Adrenal gland (tissue), 19 donors: ENCODE measurements at regions of chr17 and their contacts with region 1.

Region 1: DNA sequence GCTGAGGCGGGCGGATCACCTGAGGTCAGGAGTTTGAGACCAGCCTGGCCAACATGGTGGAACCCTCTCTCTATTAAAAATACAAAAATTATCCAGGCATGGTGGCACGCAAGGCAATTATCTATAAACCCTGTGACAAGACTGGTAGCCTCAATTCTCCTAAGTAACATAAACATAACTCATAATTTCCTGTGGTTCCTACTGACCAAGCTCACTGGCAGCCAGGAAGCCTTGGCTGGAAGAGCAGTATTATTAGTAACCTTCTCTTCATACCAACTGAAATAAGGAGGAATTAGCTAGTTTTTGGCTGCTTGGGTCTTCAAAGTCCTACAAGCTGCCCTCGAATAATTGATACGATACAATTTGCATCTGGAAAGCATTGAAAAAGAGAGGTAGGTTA is 31.6 kb upstream of the LRRC37A3 start:
- DNase-seq: no peak
- H3K4me3 ChIP-seq: no peak overlapping the region
- H3K27ac ChIP-seq: no peak overlapping the region
- H3K4me1 ChIP-seq: no peaks in the 10 kb centered on the region
- H3K27me3 ChIP-seq: no peaks in the 10 kb centered on the region
- CTCF ChIP-seq: no peak
- POLR2A ChIP-seq: no peak

Region 2: DNA sequence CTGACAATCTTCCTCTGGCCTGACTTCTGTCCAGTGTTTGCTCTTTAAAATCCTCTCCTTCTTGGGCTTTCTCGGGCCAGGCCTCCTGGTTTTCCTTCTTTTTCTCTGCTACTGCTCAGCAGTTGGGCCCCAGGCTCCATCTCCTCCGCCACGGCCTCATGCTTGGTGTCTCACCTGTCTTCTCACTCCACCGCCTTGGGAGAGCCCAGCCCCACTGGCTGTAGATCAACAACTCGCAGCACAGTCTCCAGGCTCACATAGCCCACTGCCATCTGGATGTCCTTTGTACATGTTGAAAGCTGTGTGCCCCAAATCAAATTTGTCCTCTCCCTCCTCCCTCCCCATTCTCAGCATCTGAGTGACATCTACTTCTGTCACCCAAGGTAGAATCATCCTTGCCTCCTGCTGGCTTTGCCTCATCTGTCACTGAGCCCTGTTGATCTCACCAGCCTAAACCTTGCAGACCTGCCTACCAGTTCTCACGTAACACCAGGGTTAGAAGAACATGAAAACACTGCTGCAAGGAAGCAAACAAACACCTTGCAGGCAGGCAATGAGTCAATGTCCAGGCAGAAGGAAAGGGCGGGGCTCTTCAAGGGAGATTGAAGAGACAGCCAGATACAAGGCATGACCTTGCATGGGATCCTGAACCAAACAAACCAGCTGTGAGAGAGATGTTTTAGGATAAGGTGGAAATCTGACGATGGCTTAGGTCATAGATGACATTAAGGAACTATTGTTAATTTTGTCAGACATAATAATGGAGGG is 185.5 kb before region 1 on chr17:
- intact Hi-C with region 1: loop called (anchors 10 kb)
- DNase-seq: no peak
- H3K4me3 ChIP-seq: no peak overlapping the region
- H3K27ac ChIP-seq: no peak overlapping the region
- H3K4me1 ChIP-seq: no peaks in the 10 kb centered on the region
- H3K27me3 ChIP-seq: no peaks in the 10 kb centered on the region
- CTCF ChIP-seq: no peak
- POLR2A ChIP-seq: no peak

Region 3: GRCh38 chr17:64773836-64774761 is 176.8 kb before region 1 on chr17:
- intact Hi-C with region 1: loop called (anchors 10 kb)
- DNase-seq: peak in 1 of 7 donors; percentile 38
- H3K4me3 ChIP-seq: no peak overlapping the region
- H3K27ac ChIP-seq: no peak overlapping the region
- H3K4me1 ChIP-seq: peaks cover 14 to 20% of the 10 kb centered on the region in 2 donors
- H3K27me3 ChIP-seq: no peaks in the 10 kb centered on the region
- CTCF ChIP-seq: peak in 1 of 6 experiments; percentile 11
- POLR2A ChIP-seq: no peak

Region 4: DNA sequence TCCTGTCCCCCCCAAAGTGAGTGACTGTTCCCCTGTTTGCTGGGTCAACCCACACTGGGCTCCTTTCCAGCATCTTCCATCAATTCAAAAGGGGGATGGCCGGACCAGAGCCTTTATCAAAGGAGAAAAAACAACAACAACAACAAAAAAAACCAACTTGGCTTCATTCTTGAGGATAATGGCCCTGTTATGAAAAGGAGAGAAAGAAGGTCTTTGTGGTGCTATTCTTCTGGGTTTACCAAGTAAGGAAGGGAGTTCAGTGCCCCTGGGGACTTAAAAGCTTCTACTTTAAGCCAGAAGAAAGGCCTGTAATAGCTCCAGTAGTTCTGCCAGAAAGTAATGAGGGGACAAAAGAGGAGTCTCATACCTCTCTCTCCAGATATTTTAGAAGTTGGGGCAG is 257.8 kb after region 1 on chr17:
- intact Hi-C with region 1: no loop called
- DNase-seq: no peak
- H3K4me3 ChIP-seq: no peak overlapping the region
- H3K27ac ChIP-seq: no peak overlapping the region
- H3K4me1 ChIP-seq: no peaks in the 10 kb centered on the region
- H3K27me3 ChIP-seq: no peaks in the 10 kb centered on the region
- CTCF ChIP-seq: no peak
- POLR2A ChIP-seq: no peak

Region 5: DNA sequence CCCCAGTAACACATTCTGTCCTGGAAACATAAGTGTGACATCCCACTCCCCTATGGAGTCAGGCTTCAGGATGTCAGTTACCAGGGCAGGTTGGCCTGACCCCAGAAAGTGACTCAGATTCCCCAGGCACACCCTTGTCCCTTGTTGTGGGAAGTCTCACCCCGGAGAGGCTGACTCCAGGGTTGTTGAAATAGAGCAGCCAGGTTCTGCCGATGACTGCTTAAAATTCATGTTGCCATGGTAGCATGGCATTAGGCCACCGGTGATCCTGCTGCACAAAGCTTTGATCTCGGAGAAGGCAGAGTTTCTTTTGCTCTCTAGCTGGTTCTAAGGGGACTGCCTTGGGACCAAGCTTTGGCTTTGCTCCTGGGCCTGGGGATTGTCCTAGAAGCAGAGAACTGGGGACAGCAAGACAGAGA is 292.9 kb after region 1 on chr17:
- intact Hi-C with region 1: no loop called
- DNase-seq: peak; percentile 31 to 90 (median 71)
- H3K4me3 ChIP-seq: no peak overlapping the region
- H3K27ac ChIP-seq: no peak overlapping the region
- H3K4me1 ChIP-seq: no peaks in the 10 kb centered on the region
- H3K27me3 ChIP-seq: no peaks in the 10 kb centered on the region
- CTCF ChIP-seq: no peak
- POLR2A ChIP-seq: no peak